ENCODE measurements at regions of chr15 and their contacts with region 1.

Region 1: GRCh38 chr15:89177633-89178306 is 43.6 kb downstream of the RLBP1 start:
- H3K4me3 ChIP-seq: no peak overlapping the region
- H3K27ac ChIP-seq: no peak overlapping the region
- H3K4me1 ChIP-seq: peaks cover 10% of the 10 kb centered on the region
- CTCF ChIP-seq: peak; percentile 81

Region 2: GRCh38 chr15:88878720-88879184 is 299.0 kb before region 1 on chr15:
- CTCF ChIA-PET with region 1: interaction called, 15 read pairs
- POLR2A ChIA-PET with region 1: no interaction called
- H3K4me3 ChIP-seq: no peak overlapping the region
- H3K27ac ChIP-seq: no peak overlapping the region
- H3K4me1 ChIP-seq: no peaks in the 10 kb centered on the region
- CTCF ChIP-seq: peak; percentile 91

Region 3: GRCh38 chr15:88904624-88905327 is 273.0 kb before region 1 on chr15:
- CTCF ChIA-PET with region 1: interaction called, 56 read pairs
- POLR2A ChIA-PET with region 1: no interaction called
- H3K4me3 ChIP-seq: no peak overlapping the region
- H3K27ac ChIP-seq: no peak overlapping the region
- H3K4me1 ChIP-seq: peaks cover 4% of the 10 kb centered on the region
- CTCF ChIP-seq: peak; percentile 87

Region 4: GRCh38 chr15:89101302-89102191 is 76.2 kb before region 1 on chr15:
- CTCF ChIA-PET with region 1: interaction called, 13 read pairs
- POLR2A ChIA-PET with region 1: no interaction called
- H3K4me3 ChIP-seq: no peak overlapping the region
- H3K27ac ChIP-seq: no peak overlapping the region
- H3K4me1 ChIP-seq: peaks cover 22% of the 10 kb centered on the region
- CTCF ChIP-seq: no peak

Region 5: DNA sequence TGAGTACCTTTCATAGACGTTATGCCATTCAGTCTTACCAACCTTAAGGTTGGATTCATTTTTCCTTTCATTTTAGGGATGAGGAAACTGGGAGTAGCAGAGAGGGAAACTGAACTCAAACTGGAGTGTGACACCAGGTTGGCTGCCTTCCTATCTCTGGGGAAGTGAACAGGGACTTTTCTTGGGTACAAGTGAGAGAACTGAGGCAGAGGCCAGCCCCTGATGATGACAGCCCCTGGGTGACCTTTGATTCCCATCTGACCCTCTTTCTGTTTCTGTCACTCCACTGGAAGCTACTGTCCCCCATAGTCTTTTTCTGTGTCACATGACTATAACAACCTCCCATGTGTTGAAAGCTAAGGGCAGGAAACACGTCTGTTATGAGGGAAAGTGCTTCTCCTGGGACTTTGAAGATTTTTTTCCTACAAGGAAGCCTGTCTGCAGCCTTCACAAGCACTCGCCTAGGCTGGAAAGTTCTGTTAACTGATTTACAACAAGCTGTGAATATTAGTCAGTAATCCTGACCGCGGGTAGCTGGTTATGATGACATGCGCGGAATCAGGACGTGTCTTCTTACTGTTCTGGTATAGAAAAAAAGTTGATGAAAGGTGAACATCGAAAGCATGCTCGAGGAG is 58.2 kb before region 1 on chr15:
- CTCF ChIA-PET with region 1: interaction called, 12 read pairs
- POLR2A ChIA-PET with region 1: no interaction called
- H3K4me3 ChIP-seq: no peak overlapping the region
- H3K27ac ChIP-seq: no peak overlapping the region
- H3K4me1 ChIP-seq: peaks cover 5% of the 10 kb centered on the region
- CTCF ChIP-seq: no peak

Region 6: GRCh38 chr15:89139400-89140166 is 38.2 kb before region 1 on chr15:
- CTCF ChIA-PET with region 1: interaction called, 87 read pairs
- POLR2A ChIA-PET with region 1: no interaction called
- H3K4me3 ChIP-seq: no peak overlapping the region
- H3K27ac ChIP-seq: peak overlapping the region; percentile 53; the same call in 1 of the 2 replicates
- H3K4me1 ChIP-seq: peaks cover 17% of the 10 kb centered on the region
- CTCF ChIP-seq: peak; percentile 64

Region 7: DNA sequence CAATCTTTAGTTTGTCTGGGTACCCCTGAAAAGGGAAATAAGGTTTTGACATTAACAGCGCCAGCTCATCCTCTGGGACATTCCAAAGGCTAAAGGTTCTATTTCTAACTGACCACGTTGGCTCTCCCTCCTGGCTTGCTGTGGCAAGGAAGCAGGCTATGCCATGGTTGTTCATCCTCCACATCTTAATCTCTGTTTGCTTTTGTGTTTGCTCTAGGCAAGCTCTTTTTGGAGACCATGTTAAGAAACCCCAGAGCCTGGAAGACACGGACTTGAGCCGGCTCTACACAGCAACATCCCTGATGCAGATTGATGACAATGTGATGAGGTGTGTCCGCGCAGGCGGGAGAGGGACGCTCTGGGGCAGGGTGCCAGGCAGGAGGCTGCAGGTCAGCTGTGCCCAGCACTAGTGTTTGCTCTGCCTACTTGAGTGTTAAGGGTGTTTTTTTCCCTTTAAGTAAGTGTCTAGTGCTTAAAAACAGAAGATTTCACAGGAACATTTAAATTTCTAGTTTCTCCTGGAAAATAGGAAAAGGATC is 10.3 kb after region 1 on chr15:
- CTCF ChIA-PET with region 1: interaction called, 110 read pairs
- POLR2A ChIA-PET with region 1: interaction called, 3 read pairs
- H3K4me3 ChIP-seq: no peak overlapping the region
- H3K27ac ChIP-seq: no peak overlapping the region
- H3K4me1 ChIP-seq: no peaks in the 10 kb centered on the region
- CTCF ChIP-seq: no peak